Sigmoid colon (tissue), 7 donors: ENCODE measurements at regions of chr11 and their contacts with region 1.

Region 1: DNA sequence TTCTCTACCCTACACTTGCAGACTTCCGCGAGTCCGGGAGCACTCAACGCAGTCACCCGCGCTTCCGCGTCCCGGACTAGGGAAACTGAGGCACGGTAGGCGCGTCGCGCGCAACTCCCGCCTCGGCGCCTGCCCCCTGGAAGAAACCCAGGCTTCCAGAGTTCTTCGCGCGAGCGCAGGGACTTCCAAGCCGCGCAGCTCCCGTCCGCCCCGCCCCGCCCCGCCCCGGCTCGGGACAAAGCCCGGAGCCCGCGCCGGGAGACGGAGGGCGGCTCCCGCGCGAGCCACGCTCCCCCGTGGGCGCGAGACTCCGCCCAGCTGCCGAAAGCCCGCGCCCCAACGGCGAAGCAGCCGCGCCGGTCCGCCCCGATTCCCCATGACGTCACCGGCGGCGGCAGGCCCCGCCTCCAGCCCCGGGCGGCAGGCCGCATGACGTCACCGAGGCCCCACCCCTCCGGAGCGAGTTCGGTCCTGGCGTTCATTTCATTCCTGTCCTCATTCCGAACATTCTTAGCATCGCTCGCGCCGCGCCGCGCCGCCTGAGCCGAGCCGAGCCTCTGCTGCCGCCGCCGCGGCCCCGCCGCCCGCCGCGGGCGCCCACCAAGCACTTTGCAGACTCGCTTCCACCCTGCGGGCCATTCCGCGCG is at the start of gene TEAD1:
- DNase-seq: peak; percentile 98
- H3K4me3 ChIP-seq: peak within 1 kb of the TSS; percentile 62 to 92 (median 87)
- H3K27ac ChIP-seq: peak within 1 kb of the TSS; percentile 98 to 99 (median 99)
- H3K4me1 ChIP-seq: peaks cover 0 to 39% (median 15%) of the 10 kb centered on the region in 4 donors
- H3K27me3 ChIP-seq: no peaks in the 10 kb centered on the region
- CTCF ChIP-seq: no peak
- EP300 ChIP-seq: peak in 1 of 4 donors; percentile 61
- POLR2A ChIP-seq: peak; percentile 67 to 77
- total RNA-seq, gene TEAD1: 155 to 200 (median 186) TPM

Region 2: DNA sequence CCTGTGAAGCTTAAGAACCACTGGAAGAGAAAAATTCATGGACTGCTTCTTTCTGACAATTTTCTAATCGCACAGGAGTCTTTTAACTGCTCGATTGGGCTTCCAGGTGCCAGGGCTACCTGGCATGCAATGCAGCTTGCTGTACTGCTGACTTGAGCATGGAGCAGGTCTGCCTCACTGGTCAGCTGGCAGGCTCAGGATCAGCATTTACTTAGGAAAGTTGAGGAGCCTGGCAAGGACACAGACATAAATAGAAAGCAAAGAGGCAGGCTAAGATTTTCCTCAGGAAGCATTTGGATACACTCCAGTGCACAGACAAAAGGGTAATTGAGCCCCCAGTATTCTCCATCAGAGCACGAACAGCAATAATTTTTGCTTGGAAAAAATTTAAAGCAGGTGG is 1484.5 kb before region 1 on chr11:
- intact Hi-C with region 1: no loop called
- DNase-seq: no peak
- H3K4me3 ChIP-seq: no peak overlapping the region
- H3K27ac ChIP-seq: peak overlapping the region in 2 of 4 donors; percentile 12 to 27
- H3K4me1 ChIP-seq: peaks cover 0 to 15% (median 9%) of the 10 kb centered on the region in 4 donors
- H3K27me3 ChIP-seq: no peaks in the 10 kb centered on the region
- CTCF ChIP-seq: no peak
- EP300 ChIP-seq: no peak
- POLR2A ChIP-seq: no peak

Region 3: GRCh38 chr11:12318791-12319438 is 355.1 kb before region 1 on chr11:
- intact Hi-C with region 1: loop called (anchors 5 kb)
- DNase-seq: peak; percentile 85
- H3K4me3 ChIP-seq: no peak overlapping the region
- H3K27ac ChIP-seq: peak overlapping the region; percentile 70 to 91 (median 82)
- H3K4me1 ChIP-seq: peaks cover 0 to 59% (median 50%) of the 10 kb centered on the region in 4 donors
- H3K27me3 ChIP-seq: no peaks in the 10 kb centered on the region
- CTCF ChIP-seq: no peak
- EP300 ChIP-seq: peak; percentile 77 to 91 (median 89)
- POLR2A ChIP-seq: no peak

Region 4: DNA sequence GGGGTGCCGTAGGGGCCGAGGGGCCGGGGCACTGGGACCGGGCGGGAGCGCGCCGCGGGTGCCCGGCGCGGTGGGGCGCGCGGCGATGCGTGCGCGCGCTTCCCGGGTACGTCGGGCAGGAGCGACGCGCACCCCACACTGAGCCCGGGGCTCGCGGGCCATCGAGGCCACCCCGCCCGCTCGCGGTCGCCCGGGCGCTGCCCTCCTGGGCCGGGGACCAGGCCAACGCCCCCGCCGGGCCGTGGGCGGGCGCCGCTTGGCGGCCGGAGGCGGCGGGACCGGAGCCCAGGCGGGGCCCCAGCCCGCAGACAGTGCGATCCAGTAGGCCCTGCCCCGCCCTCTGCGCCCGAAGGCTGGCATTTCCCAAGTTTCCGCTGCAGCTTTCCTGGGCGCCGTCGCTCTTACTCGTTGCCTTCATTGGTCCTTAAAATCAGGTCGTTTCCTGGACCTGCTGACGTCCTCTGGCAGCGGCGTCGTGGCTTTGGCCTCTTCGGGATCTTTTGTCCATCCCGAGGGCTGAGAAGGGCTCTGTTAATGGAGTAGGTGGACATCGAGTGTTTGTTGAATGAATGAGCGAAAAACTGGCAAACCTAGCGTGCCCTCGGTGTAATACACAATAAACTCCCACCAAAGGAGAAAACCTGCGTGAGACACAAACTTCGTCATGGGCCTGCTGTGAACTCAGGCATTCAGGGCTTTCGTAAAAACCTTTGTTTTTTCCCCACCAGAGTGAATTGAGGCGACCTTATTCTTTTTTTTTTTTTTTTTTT is 296.0 kb before region 1 on chr11:
- intact Hi-C with region 1: loop called (anchors 1 kb)
- DNase-seq: peak; percentile 94
- H3K4me3 ChIP-seq: peak overlapping the region; percentile 51 to 83 (median 72)
- H3K27ac ChIP-seq: peak overlapping the region; percentile 97 to 99 (median 98)
- H3K4me1 ChIP-seq: peaks cover 0 to 65% (median 57%) of the 10 kb centered on the region in 4 donors
- H3K27me3 ChIP-seq: no peaks in the 10 kb centered on the region
- CTCF ChIP-seq: no peak
- EP300 ChIP-seq: peak in 2 of 4 donors; percentile 58 to 86
- POLR2A ChIP-seq: peak; percentile 37 to 57

Region 5: GRCh38 chr11:12404436-12404835 is 269.6 kb before region 1 on chr11:
- intact Hi-C with region 1: no loop called
- DNase-seq: peak; percentile 91
- H3K4me3 ChIP-seq: no peak overlapping the region
- H3K27ac ChIP-seq: peak overlapping the region; percentile 97 to 99 (median 98)
- H3K4me1 ChIP-seq: peaks cover 0 to 91% (median 76%) of the 10 kb centered on the region in 4 donors
- H3K27me3 ChIP-seq: no peaks in the 10 kb centered on the region
- CTCF ChIP-seq: no peak
- EP300 ChIP-seq: no peak
- POLR2A ChIP-seq: no peak

Region 6: DNA sequence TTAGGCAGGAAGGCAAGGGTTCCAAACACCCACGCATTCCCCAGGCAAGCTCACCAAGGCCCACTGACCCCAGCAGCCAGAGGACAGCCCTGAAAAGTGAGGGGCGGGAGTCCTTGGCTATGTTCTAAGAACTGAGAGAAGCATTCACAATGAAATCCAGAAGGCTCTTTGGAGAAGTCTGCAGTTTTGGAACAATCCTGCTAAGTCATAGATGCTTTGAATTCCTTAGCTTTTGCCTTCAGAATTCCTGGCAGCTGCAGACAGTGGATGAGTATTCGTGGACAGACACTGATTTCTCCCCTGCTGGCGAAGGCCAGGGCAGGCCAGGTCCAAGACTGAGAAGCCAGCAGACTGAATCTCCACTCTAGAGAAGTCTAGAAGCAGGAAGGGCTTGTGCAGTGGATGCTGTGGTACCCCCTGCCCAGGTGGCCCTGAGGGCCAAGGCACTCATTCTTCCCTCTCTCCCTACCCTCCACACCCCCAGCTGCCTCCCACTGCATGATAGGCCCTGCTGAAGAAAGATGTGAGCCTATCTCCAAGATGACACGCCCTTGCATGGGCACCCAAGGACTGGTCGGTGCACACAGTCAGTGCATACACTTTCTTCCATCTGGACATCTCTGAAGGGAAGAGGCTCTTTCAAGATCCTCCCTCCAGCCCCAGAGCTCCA is 133.0 kb before region 1 on chr11:
- intact Hi-C with region 1: loop called (anchors 5 kb)
- DNase-seq: peak; percentile 83
- H3K4me3 ChIP-seq: no peak overlapping the region
- H3K27ac ChIP-seq: peak overlapping the region; percentile 70 to 84 (median 76)
- H3K4me1 ChIP-seq: peaks cover 0 to 61% (median 54%) of the 10 kb centered on the region in 4 donors
- H3K27me3 ChIP-seq: no peaks in the 10 kb centered on the region
- CTCF ChIP-seq: peak in 2 of 4 experiments; percentile 19 to 20
- EP300 ChIP-seq: no peak
- POLR2A ChIP-seq: no peak

Region 7: GRCh38 chr11:12813371-12814225 is 139.6 kb after region 1 on chr11:
- intact Hi-C with region 1: loop called (anchors 5 kb)
- DNase-seq: peak; percentile 87
- H3K4me3 ChIP-seq: no peak overlapping the region
- H3K27ac ChIP-seq: peak overlapping the region; percentile 53 to 85 (median 80)
- H3K4me1 ChIP-seq: peaks cover 0 to 88% (median 76%) of the 10 kb centered on the region in 4 donors
- H3K27me3 ChIP-seq: no peaks in the 10 kb centered on the region
- CTCF ChIP-seq: peak in 1 of 4 experiments; percentile 13
- EP300 ChIP-seq: no peak
- POLR2A ChIP-seq: no peak